ENCODE measurements at regions of chr2 and their contacts with region 1.

Region 1: GRCh38 chr2:230774348-230774951 is 61.8 kb downstream of the CAB39 start:
- DNase-seq: no peak
- ATAC-seq: no peak
- H3K4me3 ChIP-seq: no peak overlapping the region
- H3K4me3 Mint-ChIP-seq: no peak overlapping the region
- H3K27ac ChIP-seq: no peak overlapping the region
- H3K27ac Mint-ChIP-seq: no peak overlapping the region
- H3K4me1 ChIP-seq: peaks cover 52% of the 10 kb centered on the region
- H3K4me1 Mint-ChIP-seq: peaks cover 85% of the 10 kb centered on the region
- H3K27me3 ChIP-seq: no peaks in the 10 kb centered on the region
- H3K27me3 Mint-ChIP-seq: no peaks in the 10 kb centered on the region
- CTCF ChIP-seq: no peak

Region 2: DNA sequence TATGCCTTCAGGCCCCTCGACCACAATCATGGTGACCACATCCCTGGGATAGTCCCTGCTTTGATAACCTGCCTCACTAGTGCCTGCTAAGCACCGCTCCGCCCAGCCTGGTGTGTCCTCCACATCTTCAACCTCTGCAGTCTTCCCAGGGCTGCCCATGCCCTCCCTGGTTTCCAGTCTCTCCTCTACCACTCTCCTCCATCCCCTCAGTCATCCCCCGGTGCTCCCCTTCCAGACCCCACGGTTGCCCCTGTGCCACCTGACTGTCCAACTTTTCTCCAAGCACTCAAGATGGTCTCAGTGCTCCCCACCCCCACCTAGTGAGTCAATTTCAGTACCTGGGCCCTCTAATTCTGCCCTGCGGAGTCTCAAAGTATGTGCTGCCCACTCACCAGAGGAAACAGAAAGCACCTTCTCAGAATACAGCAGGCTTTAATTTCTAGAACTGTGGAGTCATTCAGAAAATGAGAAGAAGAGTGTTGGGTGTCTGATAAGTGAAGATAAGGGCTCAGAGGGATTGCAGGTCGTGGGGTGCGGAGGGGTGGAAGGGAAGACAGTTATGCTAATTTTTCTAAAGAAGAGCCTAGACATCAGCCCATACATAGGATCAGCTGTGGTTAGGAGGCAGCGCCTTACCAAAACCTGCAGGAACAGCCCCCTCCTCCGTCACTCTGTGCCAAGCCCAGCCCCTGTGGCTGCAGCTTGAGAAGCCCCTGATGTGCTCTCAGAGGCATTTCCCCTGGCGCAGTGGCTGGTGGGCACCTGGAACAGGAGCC is 115.4 kb before region 1 on chr2:
- CTCF ChIA-PET with region 1: no interaction called
- POLR2A ChIA-PET with region 1: no interaction called
- intact Hi-C with region 1: loop called in 1 of 2 experiments (anchors 5 kb)
- DNase-seq: peak in 5 of 9 experiments; percentile 20 to 66 (median 47)
- ATAC-seq: peak; percentile 47
- H3K4me3 ChIP-seq: peak overlapping the region in 1 of 2 experiments; percentile 23
- H3K4me3 Mint-ChIP-seq: peak overlapping the region; percentile 56
- H3K27ac ChIP-seq: peak overlapping the region in 1 of 2 experiments; percentile 55
- H3K27ac Mint-ChIP-seq: peak overlapping the region; percentile 91
- H3K4me1 ChIP-seq: peaks cover 78% of the 10 kb centered on the region
- H3K4me1 Mint-ChIP-seq: peaks cover 84% of the 10 kb centered on the region
- H3K27me3 ChIP-seq: no peaks in the 10 kb centered on the region
- H3K27me3 Mint-ChIP-seq: no peaks in the 10 kb centered on the region
- CTCF ChIP-seq: no peak

Region 3: DNA sequence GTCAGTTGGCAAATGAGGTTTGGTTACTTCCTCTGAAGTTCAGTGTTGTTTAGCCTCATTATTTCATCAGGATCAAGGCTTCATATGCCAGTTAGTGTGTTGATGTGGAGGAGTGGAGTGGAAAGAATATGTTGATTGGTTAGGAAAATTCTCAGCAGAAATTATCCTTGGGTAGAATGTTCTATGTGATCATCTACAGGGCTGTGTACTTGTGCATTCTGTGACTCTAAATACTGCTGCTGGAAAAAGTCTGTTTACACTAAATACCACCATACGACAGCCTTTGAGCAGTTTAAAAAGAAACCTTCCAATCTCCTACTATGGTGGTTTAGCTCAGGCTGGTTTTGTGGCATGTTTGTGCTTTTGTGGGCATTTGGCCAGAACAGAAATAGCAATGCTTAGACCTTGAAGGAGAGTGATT is 36.0 kb before region 1 on chr2:
- CTCF ChIA-PET with region 1: no interaction called
- POLR2A ChIA-PET with region 1: no interaction called
- intact Hi-C with region 1: no loop called
- DNase-seq: no peak
- ATAC-seq: no peak
- H3K4me3 ChIP-seq: no peak overlapping the region
- H3K4me3 Mint-ChIP-seq: peak overlapping the region; percentile 9
- H3K27ac ChIP-seq: peak overlapping the region in 1 of 2 experiments; percentile 21
- H3K27ac Mint-ChIP-seq: peak overlapping the region; percentile 87
- H3K4me1 ChIP-seq: peaks cover 52% of the 10 kb centered on the region
- H3K4me1 Mint-ChIP-seq: peaks cover 75% of the 10 kb centered on the region
- H3K27me3 ChIP-seq: no peaks in the 10 kb centered on the region
- H3K27me3 Mint-ChIP-seq: no peaks in the 10 kb centered on the region
- CTCF ChIP-seq: no peak

Region 4: DNA sequence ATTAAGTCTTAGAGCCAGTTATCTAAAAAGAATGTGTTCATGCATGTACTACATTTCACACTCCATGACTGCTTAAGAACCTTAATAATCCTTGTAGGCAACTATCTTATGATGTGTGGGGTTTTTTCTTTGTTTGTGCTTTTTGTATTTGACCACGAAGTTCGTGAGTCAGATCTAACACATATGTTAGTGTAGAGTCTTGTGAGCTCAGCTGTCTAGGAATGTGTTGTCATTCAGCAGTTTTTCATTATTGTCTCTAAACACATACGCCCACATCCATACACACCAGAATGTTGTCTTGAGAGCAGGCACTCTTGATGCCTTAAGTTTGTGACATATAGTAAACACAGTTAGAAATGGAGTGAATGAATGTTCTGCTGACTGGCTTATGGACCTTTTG is 23.4 kb before region 1 on chr2:
- CTCF ChIA-PET with region 1: no interaction called
- POLR2A ChIA-PET with region 1: interaction called, 4 read pairs
- intact Hi-C with region 1: loop called in 1 of 2 experiments (anchors 2 kb)
- DNase-seq: peak in 2 of 9 experiments; percentile 20 to 21
- ATAC-seq: peak; percentile 55
- H3K4me3 ChIP-seq: no peak overlapping the region
- H3K4me3 Mint-ChIP-seq: no peak overlapping the region
- H3K27ac ChIP-seq: no peak overlapping the region
- H3K27ac Mint-ChIP-seq: peak overlapping the region; percentile 53
- H3K4me1 ChIP-seq: peaks cover 33% of the 10 kb centered on the region
- H3K4me1 Mint-ChIP-seq: peaks cover 78% of the 10 kb centered on the region
- H3K27me3 ChIP-seq: no peaks in the 10 kb centered on the region
- H3K27me3 Mint-ChIP-seq: no peaks in the 10 kb centered on the region
- CTCF ChIP-seq: no peak

Measured in CD8-positive, alpha-beta T cell (primary cell).